WTC11 (cell line): ENCODE measurements at regions of chr4 and their contacts with region 1.

Region 1: GRCh38 chr4:77358315-77358928 is 201.4 kb downstream of the CCNG2 start:
- DNase-seq: peak; percentile 13
- ATAC-seq: peak; percentile 72
- H3K4me3 Mint-ChIP-seq: no peak overlapping the region
- H3K27ac Mint-ChIP-seq: no peak overlapping the region
- H3K4me1 Mint-ChIP-seq: peaks cover 8% of the 10 kb centered on the region
- H3K27me3 Mint-ChIP-seq: peaks cover 12% of the 10 kb centered on the region
- CTCF ChIP-seq: peak; percentile 44

Region 2: DNA sequence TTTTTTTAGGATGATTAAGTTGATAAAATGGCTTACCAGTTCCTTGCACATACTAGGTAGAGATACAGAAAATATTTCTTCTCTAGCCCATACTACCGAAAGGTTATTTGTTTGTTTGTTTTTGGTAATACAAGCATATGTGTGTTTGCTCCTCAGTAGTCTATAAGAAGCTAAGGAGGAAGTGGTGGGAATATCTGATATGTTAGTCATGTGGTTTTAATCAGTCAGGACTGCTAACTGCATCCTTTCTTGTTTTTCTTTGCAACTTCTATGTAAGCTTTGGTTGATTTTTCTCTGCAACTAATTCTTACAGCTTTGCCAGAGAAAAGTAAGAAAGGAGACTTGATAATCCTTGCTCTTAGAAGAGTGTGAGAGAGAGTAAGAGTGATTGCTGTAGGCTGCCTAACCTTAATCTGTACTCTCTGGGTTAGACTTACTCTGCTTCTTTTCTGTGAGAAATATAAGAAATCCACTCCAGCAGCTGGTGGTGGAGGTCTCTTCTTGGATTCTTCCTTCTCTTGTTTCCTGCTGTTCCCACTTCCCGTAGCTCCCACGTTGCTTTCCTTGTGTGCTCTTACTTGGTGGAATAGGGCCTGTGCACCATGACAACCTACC is 380.6 kb before region 1 on chr4:
- CTCF ChIA-PET with region 1: no interaction called
- POLR2A ChIA-PET with region 1: no interaction called
- DNase-seq: no peak
- ATAC-seq: no peak
- H3K4me3 Mint-ChIP-seq: no peak overlapping the region
- H3K27ac Mint-ChIP-seq: peak overlapping the region; percentile 83
- H3K4me1 Mint-ChIP-seq: peaks cover 44% of the 10 kb centered on the region
- H3K27me3 Mint-ChIP-seq: no peaks in the 10 kb centered on the region
- CTCF ChIP-seq: no peak

Region 3: GRCh38 chr4:77240469-77241066 is 117.9 kb before region 1 on chr4:
- CTCF ChIA-PET with region 1: interaction called, 15 read pairs
- POLR2A ChIA-PET with region 1: interaction called, 3 read pairs
- DNase-seq: peak; percentile 89
- ATAC-seq: peak; percentile 99
- H3K4me3 Mint-ChIP-seq: no peak overlapping the region
- H3K27ac Mint-ChIP-seq: no peak overlapping the region
- H3K4me1 Mint-ChIP-seq: no peaks in the 10 kb centered on the region; the same call in 1 of the 2 replicates
- H3K27me3 Mint-ChIP-seq: peaks cover 6% of the 10 kb centered on the region
- CTCF ChIP-seq: peak; percentile 80

Region 4: GRCh38 chr4:77308843-77309242 is 49.6 kb before region 1 on chr4:
- CTCF ChIA-PET with region 1: interaction called, 17 read pairs
- POLR2A ChIA-PET with region 1: no interaction called
- DNase-seq: no peak
- ATAC-seq: peak; percentile 92
- H3K4me3 Mint-ChIP-seq: no peak overlapping the region
- H3K27ac Mint-ChIP-seq: no peak overlapping the region
- H3K4me1 Mint-ChIP-seq: no peaks in the 10 kb centered on the region
- H3K27me3 Mint-ChIP-seq: peaks cover 8% of the 10 kb centered on the region; the same call in 1 of the 2 replicates
- CTCF ChIP-seq: no peak

Region 5: DNA sequence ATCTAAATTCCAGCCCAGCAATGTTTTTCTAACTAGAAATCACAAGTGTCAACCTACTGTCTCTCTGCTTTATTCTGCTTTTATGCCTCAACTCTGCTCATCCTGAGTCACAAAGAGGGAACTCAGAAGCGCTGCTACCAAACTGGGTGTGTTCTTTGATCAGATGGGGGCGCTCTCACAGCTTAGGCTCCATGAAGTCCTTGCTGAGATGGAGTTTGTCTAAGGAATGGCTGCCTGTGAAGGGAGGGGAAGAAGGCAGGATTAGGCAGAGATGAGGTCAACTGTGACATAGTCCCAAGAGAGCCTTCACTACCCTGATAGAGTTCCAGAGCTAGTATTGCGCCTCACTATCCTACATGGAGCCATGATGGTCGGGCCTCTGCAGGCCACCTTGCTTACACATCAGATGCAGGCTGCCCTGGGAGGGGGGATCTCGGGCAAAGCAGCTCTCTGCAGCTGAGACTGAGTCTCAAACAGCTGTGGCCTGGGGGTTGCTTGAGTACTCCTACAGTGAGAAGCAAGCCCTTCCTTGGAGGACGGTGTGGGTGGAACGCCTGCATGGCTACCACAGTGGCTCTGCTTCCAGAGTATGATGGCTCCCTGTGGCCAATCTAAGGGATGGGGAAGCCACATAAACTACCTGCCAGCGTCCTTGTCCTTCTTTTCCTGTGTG is 18.5 kb after region 1 on chr4:
- CTCF ChIA-PET with region 1: interaction called, 11 read pairs
- POLR2A ChIA-PET with region 1: no interaction called
- DNase-seq: peak; percentile 35
- ATAC-seq: peak; percentile 78
- H3K4me3 Mint-ChIP-seq: no peak overlapping the region
- H3K27ac Mint-ChIP-seq: no peak overlapping the region
- H3K4me1 Mint-ChIP-seq: peaks cover 20% of the 10 kb centered on the region
- H3K27me3 Mint-ChIP-seq: no peaks in the 10 kb centered on the region
- CTCF ChIP-seq: no peak

Region 6: DNA sequence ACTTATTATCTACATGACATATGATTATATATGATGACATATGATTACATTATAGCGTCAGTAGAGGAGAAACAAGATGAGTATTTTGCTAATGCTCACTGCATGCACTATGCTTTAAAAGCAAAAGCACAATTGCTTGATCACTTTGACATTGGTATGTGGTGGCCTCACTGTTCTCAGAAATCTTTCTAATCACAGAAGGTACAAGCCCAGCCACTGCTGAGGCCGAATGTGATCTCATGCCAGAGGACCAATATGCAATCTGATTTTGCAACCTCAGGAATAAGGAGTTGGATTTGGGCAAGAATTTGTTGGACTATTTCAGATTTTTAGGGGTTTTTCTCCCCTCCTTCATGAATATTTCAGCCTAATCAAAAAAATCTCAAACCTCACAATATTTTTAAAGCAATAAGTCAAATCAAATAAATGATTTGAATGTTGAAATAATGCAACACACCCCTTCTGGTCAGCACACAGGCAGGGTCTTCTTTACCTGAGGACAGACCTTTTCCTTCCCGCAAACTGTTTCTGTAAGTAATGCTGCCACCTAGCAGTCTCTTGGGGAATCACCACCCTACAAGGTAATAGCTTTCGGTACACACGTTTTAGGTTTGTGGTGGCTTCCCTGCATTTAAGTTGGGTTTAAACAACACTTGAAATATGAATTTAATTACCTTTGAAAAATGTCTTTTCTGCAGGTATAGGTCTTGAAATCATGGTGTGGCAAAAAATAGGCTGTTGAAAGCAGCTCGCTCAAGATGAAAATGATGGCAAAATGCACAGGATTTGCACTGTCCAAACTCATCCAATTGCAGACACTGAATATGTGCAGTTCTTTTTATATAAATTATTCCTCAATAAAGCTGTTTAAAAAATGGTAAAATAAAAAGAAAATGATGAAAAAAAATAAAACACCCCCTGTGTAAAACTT is 242.4 kb after region 1 on chr4:
- CTCF ChIA-PET with region 1: interaction called, 11 read pairs
- POLR2A ChIA-PET with region 1: no interaction called
- DNase-seq: peak; percentile 29
- ATAC-seq: peak; percentile 88
- H3K4me3 Mint-ChIP-seq: no peak overlapping the region
- H3K27ac Mint-ChIP-seq: no peak overlapping the region
- H3K4me1 Mint-ChIP-seq: no peaks in the 10 kb centered on the region
- H3K27me3 Mint-ChIP-seq: no peaks in the 10 kb centered on the region
- CTCF ChIP-seq: peak; percentile 62; the same call in 1 of the 2 replicates